Caco-2 (cell line): ENCODE measurements at regions of chr13 and their contacts with region 1.

Region 1: DNA sequence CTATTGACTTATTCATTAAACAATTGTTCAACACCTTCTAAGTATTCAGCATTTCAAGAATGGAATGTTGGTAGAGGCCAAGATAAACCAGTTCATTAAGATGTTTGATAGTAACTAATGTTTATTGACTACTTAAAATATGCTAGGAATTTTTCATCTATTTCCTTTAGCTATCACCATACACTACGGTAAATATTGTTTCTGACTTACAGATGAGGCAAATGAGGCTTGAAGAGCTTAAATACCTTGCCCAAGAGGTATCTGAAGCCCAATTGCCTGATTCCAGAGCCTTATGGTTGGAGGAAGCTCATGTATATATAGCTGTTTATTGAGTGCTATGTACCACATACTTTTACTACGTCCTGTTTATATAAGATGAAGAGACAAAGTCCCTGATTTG is 286.2 kb downstream of the NDFIP2 start:
- DNase-seq: peak; percentile 62 to 66
- H3K4me3 ChIP-seq: no peak overlapping the region
- H3K4me3 Mint-ChIP-seq: no peak overlapping the region
- H3K27ac Mint-ChIP-seq: no peak overlapping the region
- H3K4me1 ChIP-seq: peaks cover 23% of the 10 kb centered on the region
- H3K4me1 Mint-ChIP-seq: peaks cover 14% of the 10 kb centered on the region
- H3K27me3 ChIP-seq: no peaks in the 10 kb centered on the region
- H3K27me3 Mint-ChIP-seq: no peaks in the 10 kb centered on the region
- CTCF ChIP-seq: no peak

Region 2: DNA sequence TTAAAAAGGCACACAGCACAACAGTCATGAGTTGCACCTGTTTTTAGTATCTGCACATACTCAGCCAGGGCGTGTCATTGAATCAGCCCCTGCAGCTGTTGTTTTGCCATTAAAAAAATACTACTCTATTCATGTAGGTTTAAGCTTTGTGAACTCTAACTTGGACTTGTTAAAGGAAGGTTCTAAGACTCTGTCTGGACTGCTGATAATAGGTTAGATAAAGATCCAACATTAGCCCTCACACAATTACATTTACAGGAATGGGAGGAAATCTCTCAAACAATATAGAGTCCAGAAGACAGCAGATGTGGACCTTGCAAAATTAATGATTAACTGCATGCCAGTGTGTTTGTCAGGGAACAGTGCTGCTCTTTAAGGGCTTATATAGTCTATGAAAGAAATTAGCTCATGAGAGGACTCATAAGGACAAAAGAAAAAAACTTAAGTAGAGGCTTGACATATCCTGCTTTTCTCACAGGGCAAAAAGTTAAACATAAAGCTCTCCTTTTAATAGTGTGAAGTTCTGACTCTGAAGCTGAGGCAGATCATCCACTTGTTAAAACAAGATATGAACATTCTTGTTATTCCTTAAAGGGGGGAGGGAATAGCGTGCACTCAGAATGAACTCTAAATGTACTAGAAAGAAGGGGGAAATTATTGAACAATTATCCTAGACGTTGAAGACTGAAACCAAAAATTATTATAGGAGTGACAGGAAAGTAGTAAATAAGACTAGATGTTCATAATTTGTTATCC is 42.6 kb before region 1 on chr13:
- CTCF ChIA-PET with region 1: no interaction called
- POLR2A ChIA-PET with region 1: no interaction called
- intact Hi-C with region 1: loop called (anchors 1 kb)
- DNase-seq: peak; percentile 56 to 67
- H3K4me3 ChIP-seq: no peak overlapping the region
- H3K4me3 Mint-ChIP-seq: peak overlapping the region; percentile 58
- H3K27ac Mint-ChIP-seq: peak overlapping the region; percentile 28
- H3K4me1 ChIP-seq: peaks cover 25% of the 10 kb centered on the region
- H3K4me1 Mint-ChIP-seq: peaks cover 15% of the 10 kb centered on the region
- H3K27me3 ChIP-seq: no peaks in the 10 kb centered on the region
- H3K27me3 Mint-ChIP-seq: no peaks in the 10 kb centered on the region
- CTCF ChIP-seq: no peak

Region 3: GRCh38 chr13:79812070-79812850 is 45.1 kb after region 1 on chr13:
- CTCF ChIA-PET with region 1: no interaction called
- POLR2A ChIA-PET with region 1: no interaction called
- intact Hi-C with region 1: loop called (anchors 1 kb)
- DNase-seq: no peak
- H3K4me3 ChIP-seq: no peak overlapping the region
- H3K4me3 Mint-ChIP-seq: no peak overlapping the region
- H3K27ac Mint-ChIP-seq: peak overlapping the region; percentile 88
- H3K4me1 ChIP-seq: peaks cover 29% of the 10 kb centered on the region
- H3K4me1 Mint-ChIP-seq: peaks cover 31% of the 10 kb centered on the region
- H3K27me3 ChIP-seq: no peaks in the 10 kb centered on the region
- H3K27me3 Mint-ChIP-seq: no peaks in the 10 kb centered on the region
- CTCF ChIP-seq: no peak

Region 4: GRCh38 chr13:80132741-80133601 is 365.8 kb after region 1 on chr13:
- CTCF ChIA-PET with region 1: no interaction called
- POLR2A ChIA-PET with region 1: no interaction called
- intact Hi-C with region 1: no loop called
- DNase-seq: peak; percentile 87 to 96
- H3K4me3 ChIP-seq: 0 out of 2 replicates have a peak overlapping the region, but pooled peaks have one; percentile 13
- H3K4me3 Mint-ChIP-seq: peak overlapping the region; percentile 74
- H3K27ac Mint-ChIP-seq: peak overlapping the region; percentile 91
- H3K4me1 ChIP-seq: peaks cover 28% of the 10 kb centered on the region
- H3K4me1 Mint-ChIP-seq: peaks cover 24% of the 10 kb centered on the region
- H3K27me3 ChIP-seq: no peaks in the 10 kb centered on the region
- H3K27me3 Mint-ChIP-seq: peaks cover 2% of the 10 kb centered on the region
- CTCF ChIP-seq: no peak

Region 5: GRCh38 chr13:80297094-80297493 is 530.0 kb after region 1 on chr13:
- CTCF ChIA-PET with region 1: no interaction called
- POLR2A ChIA-PET with region 1: no interaction called
- intact Hi-C with region 1: no loop called
- DNase-seq: no peak
- H3K4me3 ChIP-seq: no peak overlapping the region
- H3K4me3 Mint-ChIP-seq: no peak overlapping the region
- H3K27ac Mint-ChIP-seq: no peak overlapping the region
- H3K4me1 ChIP-seq: no peaks in the 10 kb centered on the region
- H3K4me1 Mint-ChIP-seq: no peaks in the 10 kb centered on the region
- H3K27me3 ChIP-seq: no peaks in the 10 kb centered on the region
- H3K27me3 Mint-ChIP-seq: no peaks in the 10 kb centered on the region
- CTCF ChIP-seq: no peak